H1 (cell line): ENCODE measurements at regions of chr4 and their contacts with region 1.

Region 1: DNA sequence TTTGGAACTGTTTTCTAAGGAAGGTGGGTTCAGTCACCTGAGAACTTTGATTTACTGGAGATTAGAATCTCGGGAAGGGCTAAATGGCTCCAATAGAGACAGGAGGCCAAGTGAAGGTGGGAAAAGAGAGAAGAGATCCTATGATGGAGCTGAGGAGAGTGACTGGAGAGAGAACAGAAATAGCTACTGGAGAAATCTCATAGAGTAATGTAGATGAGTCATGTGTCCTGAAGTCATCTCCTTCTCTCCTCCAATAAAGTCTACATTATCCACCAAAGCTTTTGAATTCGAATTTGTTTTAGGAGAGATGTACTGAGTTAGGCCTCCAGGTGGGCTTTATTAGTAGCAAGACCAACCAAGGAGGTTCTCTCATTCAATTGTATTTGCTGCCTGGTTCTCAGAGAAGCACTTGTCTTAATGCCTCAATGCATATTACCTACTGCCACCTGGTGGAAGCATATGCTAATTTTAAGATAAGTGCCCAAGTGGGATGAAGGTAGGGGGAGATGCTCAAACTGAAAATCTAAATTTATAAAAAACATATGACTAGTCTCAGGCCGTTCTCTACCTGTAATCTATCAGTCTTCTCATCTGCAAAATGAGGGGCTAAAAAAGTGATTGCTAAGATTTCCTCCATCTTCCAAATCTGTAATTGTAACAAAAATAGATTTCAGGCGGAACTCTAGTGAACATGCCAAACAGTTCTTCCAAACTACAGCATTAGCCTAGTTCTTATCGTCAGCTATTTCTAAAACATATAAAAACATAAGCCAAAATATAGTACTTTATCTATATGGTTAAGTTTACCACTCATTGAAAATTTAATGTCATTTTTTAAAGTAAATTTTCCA is 24.4 kb downstream of the TXK start:
- DNase-seq: no peak
- H3K4me3 ChIP-seq: no peak overlapping the region
- H3K27ac ChIP-seq: no peak overlapping the region
- H3K4me1 ChIP-seq: peaks cover 0 to 3% (median 0%) of the 10 kb centered on the region in 4 experiments; a peak in 2 of 7 replicates
- H3K27me3 ChIP-seq: no peaks in the 10 kb centered on the region
- CTCF ChIP-seq: peak in 2 of 3 experiments; percentile 55 to 68; a peak in 3 of 4 replicates
- EP300 ChIP-seq: no peak
- POLR2A ChIP-seq: no peak
- RAD21 ChIP-seq: peak; percentile 58 to 67

Region 2: GRCh38 chr4:48093949-48094550 is 15.6 kb before region 1 on chr4:
- CTCF ChIA-PET with region 1: interaction called, 28 read pairs
- POLR2A ChIA-PET with region 1: no interaction called
- DNase-seq: peak in 1 of 2 experiments; percentile 15
- H3K4me3 ChIP-seq: no peak overlapping the region
- H3K27ac ChIP-seq: no peak overlapping the region
- H3K4me1 ChIP-seq: no peaks in the 10 kb centered on the region
- H3K27me3 ChIP-seq: no peaks in the 10 kb centered on the region
- CTCF ChIP-seq: no peak
- EP300 ChIP-seq: no peak
- POLR2A ChIP-seq: no peak
- RAD21 ChIP-seq: no peak